IMR-90 (cell line): ENCODE measurements at regions of chr15 and their contacts with region 1.

Region 1: GRCh38 chr15:40843885-40844695 is at the start of gene SPINT1:
- DNase-seq: no peak
- ATAC-seq: peak; percentile 64
- H3K4me3 ChIP-seq: peak within 1 kb of the TSS; percentile 26
- H3K27ac ChIP-seq: no peak within 1 kb of the TSS
- H3K4me1 ChIP-seq: 0 out of 2 replicates have a peak, but pooled peaks cover 3% of the 10 kb centered on the region
- H3K27me3 ChIP-seq: peaks cover 38% of the 10 kb centered on the region
- CTCF ChIP-seq: no peak
- POLR2A ChIP-seq: no peak
- RAD21 ChIP-seq: no peak
- total RNA-seq, gene SPINT1: 0.56 and 0.90 TPM in 2 replicates

Region 2: GRCh38 chr15:40367686-40368611 is 476.1 kb before region 1 on chr15:
- CTCF ChIA-PET with region 1: no interaction called
- POLR2A ChIA-PET with region 1: no interaction called
- dilution Hi-C with region 1: no loop called
- in situ Hi-C with region 1: no loop called
- intact Hi-C with region 1: no loop called
- DNase-seq: peak; percentile 87
- ATAC-seq: peak; percentile 95
- H3K4me3 ChIP-seq: no peak overlapping the region
- H3K27ac ChIP-seq: no peak overlapping the region; the same call in 1 of the 2 replicates
- H3K4me1 ChIP-seq: peaks cover 2% of the 10 kb centered on the region
- H3K27me3 ChIP-seq: peaks cover 5% of the 10 kb centered on the region; the same call in 1 of the 2 replicates
- CTCF ChIP-seq: peak; percentile 95
- POLR2A ChIP-seq: no peak
- RAD21 ChIP-seq: peak; percentile 63

Region 3: GRCh38 chr15:40471105-40471805 is 372.8 kb before region 1 on chr15:
- CTCF ChIA-PET with region 1: no interaction called
- POLR2A ChIA-PET with region 1: no interaction called
- dilution Hi-C with region 1: no loop called
- in situ Hi-C with region 1: no loop called
- intact Hi-C with region 1: no loop called
- DNase-seq: peak; percentile 4
- ATAC-seq: peak; percentile 65
- H3K4me3 ChIP-seq: peak overlapping the region; percentile 61
- H3K27ac ChIP-seq: peak overlapping the region; percentile 83
- H3K4me1 ChIP-seq: peaks cover 12% of the 10 kb centered on the region
- H3K27me3 ChIP-seq: peaks cover 5% of the 10 kb centered on the region
- CTCF ChIP-seq: no peak
- POLR2A ChIP-seq: no peak
- RAD21 ChIP-seq: no peak

Region 4: GRCh38 chr15:40569139-40569953 is 274.7 kb before region 1 on chr15 and contains the start of gene RPUSD2:
- CTCF ChIA-PET with region 1: no interaction called
- POLR2A ChIA-PET with region 1: no interaction called
- dilution Hi-C with region 1: no loop called
- in situ Hi-C with region 1: no loop called
- intact Hi-C with region 1: no loop called
- DNase-seq: peak; percentile 89
- ATAC-seq: peak; percentile 81
- H3K4me3 ChIP-seq: peak within 1 kb of the TSS; percentile 83
- H3K27ac ChIP-seq: peak within 1 kb of the TSS; percentile 78
- H3K4me1 ChIP-seq: no peaks in the 10 kb centered on the region; the same call in 1 of the 2 replicates
- H3K27me3 ChIP-seq: no peaks in the 10 kb centered on the region
- CTCF ChIP-seq: no peak
- POLR2A ChIP-seq: peak; percentile 90
- RAD21 ChIP-seq: no peak
- total RNA-seq, gene RPUSD2: 11.9 and 13.4 TPM in 2 replicates

Region 5: DNA sequence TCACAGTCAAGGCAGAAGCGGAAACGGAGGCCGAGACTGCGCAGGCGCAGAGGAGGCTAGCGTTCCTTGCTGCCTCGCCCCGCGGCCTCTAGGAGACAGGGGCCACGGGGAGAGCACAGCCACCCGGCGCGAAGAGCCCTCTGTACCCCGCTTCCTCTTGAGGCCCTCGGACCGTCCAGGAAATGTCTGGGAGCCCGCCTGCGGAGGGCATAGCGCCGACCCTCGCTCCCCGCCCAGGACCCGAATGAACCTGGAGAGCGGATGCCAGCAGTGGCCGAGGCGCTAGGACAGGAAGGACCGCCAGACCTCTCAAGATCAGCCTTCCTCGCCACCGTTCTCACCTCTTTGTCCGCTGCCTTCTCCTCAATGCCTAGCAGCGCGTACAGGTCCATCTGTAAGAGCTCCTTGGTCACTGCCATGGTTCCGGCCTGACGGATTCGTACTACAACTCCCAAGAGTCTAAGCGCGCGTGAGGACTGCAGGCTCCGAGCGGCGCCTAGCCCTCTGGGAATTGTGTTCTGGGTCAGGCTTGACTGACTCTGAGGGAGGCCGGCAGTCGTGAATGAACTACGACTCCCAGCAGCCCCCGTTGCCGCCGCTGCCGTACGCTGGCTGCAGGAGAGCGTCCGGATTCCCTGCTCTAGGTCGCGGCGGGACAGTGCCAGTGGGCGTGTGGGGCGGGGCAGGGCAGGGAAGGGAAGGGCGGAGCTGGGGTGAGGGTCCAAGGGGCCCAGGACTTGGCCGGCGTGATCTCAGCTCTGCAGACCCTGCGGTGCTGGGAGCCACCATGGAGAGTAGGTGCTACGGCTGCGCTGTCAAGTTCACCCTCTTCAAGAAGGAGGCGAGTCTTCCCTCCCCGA is 36.8 kb before region 1 on chr15 and contains the starts of genes DNAJC17 and ZFYVE19:
- CTCF ChIA-PET with region 1: no interaction called
- POLR2A ChIA-PET with region 1: no interaction called
- dilution Hi-C with region 1: no loop called
- in situ Hi-C with region 1: no loop called
- intact Hi-C with region 1: loop called (anchors 1 kb)
- DNase-seq: peak; percentile 97
- ATAC-seq: peak; percentile 98
- H3K4me3 ChIP-seq: peak within 1 kb of the TSS; percentile 82
- H3K27ac ChIP-seq: peak within 1 kb of the TSS; percentile 88
- H3K4me1 ChIP-seq: peaks cover 6% of the 10 kb centered on the region
- H3K27me3 ChIP-seq: no peaks in the 10 kb centered on the region
- CTCF ChIP-seq: no peak
- POLR2A ChIP-seq: peak; percentile 49; the same call in 1 of the 2 replicates
- RAD21 ChIP-seq: no peak
- total RNA-seq, gene DNAJC17: 58.3 and 107 TPM in 2 replicates
- total RNA-seq, gene ZFYVE19: 22.6 and 22.8 TPM in 2 replicates

Region 6: DNA sequence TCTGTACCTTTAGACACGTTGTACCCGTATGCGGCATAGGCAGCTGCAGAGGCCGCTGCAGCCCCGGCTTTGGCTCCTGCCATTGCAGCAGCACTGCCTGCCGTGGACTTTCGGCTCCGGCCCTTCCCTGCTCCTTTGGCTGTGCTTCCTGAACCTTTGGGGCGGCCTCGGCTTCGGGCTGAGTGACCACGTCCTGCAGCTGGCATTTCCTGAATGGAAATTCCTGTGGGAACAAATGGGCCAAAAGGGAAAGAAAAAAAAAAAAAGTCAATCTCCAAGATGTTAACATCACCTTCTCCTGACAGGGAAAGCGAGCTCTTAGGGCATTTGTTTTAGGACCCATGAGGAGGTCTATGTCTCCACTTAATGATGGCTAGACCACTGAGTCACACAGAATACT is 138.8 kb after region 1 on chr15:
- CTCF ChIA-PET with region 1: no interaction called
- POLR2A ChIA-PET with region 1: no interaction called
- dilution Hi-C with region 1: no loop called
- in situ Hi-C with region 1: no loop called
- intact Hi-C with region 1: no loop called
- DNase-seq: peak; percentile 93
- ATAC-seq: peak; percentile 66
- H3K4me3 ChIP-seq: no peak overlapping the region
- H3K27ac ChIP-seq: peak overlapping the region; percentile 94
- H3K4me1 ChIP-seq: peaks cover 31% of the 10 kb centered on the region
- H3K27me3 ChIP-seq: no peaks in the 10 kb centered on the region
- CTCF ChIP-seq: 0 out of 2 replicates have a peak, but pooled peaks have one; percentile 3
- POLR2A ChIP-seq: no peak
- RAD21 ChIP-seq: peak; percentile 15